ENCODE measurements at regions of chr5 and their contacts with region 1.

Region 1: GRCh38 chr5:177311723-177312648 is at the start of gene MXD3:
- DNase-seq: peak; percentile 99
- H3K4me3 Mint-ChIP-seq: peak within 1 kb of the TSS; percentile 94
- H3K27ac Mint-ChIP-seq: peak within 1 kb of the TSS; percentile 89
- H3K4me1 Mint-ChIP-seq: peaks cover 66% of the 10 kb centered on the region
- H3K27me3 Mint-ChIP-seq: no peaks in the 10 kb centered on the region
- total RNA-seq, gene MXD3: 74.1 to 75.0 TPM

Region 2: DNA sequence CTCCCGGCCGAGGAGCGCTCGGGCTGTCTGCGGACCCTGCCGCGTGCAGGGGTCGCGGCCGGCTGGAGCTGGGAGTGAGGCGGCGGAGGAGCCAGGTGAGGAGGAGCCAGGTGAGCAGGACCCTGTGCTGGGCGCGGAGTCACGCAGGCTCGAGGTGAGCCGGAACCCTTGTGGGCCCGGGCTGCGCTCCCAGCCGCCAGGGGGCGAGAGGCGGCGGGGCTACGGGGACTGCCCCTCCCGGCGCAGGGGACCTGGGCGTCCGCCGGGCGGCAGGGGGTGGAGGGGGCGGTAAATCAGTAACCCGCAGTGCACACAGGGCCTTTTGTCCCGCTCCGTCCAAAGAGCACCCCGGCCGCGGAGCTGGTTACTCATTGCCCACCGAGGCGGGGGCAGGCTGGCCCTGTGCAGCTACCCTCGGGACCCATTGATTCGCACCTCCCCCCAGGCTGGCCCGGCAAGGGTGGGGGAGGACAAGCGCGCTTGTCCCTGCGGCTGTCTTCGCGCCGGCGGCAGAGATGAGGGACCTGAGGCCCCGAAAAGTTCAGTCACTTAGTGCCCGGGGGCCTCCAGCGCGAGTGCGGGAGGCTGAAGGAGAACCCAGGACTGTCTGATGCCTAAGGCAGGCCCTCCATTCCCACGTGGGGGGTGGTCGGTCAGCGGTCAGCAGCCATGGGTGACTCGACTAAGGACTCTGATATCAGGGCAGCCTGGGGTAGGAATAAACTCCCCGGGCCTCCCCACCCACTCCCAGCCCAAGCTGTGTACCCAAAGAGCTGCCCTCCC is 224.9 kb before region 1 on chr5:
- CTCF ChIA-PET with region 1: no interaction called
- POLR2A ChIA-PET with region 1: no interaction called
- DNase-seq: peak; percentile 59
- H3K4me3 Mint-ChIP-seq: no peak overlapping the region
- H3K27ac Mint-ChIP-seq: no peak overlapping the region
- H3K4me1 Mint-ChIP-seq: peaks cover 12% of the 10 kb centered on the region
- H3K27me3 Mint-ChIP-seq: peaks cover 51% of the 10 kb centered on the region

Region 3: DNA sequence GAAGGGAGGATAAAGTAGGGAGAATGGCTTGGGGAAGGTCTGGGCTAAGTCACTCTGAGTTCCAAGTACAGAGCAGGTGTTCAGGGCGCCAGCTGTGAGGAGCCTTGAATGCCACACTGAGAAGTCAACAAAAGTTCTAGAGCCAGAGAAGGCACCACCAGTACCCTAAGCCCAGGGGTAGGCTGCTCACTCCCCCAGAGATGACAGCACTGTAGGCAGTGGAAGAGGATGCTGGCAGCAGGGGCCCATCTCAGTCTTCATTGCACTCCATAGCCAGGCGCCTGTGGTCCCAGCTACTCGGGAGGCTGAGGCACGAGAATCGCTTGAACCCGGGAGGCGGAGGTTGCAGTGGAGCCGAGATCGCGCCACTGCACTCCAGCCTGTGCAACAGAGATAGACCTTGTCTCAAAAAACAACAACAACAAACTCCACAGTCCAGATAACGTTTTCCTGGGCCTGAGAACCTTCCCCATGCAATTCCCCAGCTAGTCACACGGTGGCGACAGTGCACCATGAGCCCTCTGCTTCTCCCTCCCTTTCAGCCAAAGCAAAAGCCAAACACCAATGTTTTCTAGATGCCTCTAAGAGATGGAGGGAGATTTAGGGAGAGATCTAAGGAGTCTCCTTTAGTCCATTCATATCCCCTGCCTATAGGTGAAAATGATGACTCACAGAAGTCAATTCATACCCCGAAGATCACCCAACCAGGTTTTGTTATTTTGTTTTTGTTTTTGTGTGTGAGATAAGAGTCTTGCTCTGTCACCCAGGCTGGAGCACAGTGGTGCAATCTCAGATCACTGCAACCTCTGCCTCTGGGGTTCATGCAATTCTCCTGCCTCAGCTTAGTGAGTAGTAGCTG is 198.2 kb before region 1 on chr5:
- CTCF ChIA-PET with region 1: interaction called, 27 read pairs
- POLR2A ChIA-PET with region 1: no interaction called
- DNase-seq: peak; percentile 83
- H3K4me3 Mint-ChIP-seq: no peak overlapping the region
- H3K27ac Mint-ChIP-seq: no peak overlapping the region
- H3K4me1 Mint-ChIP-seq: peaks cover 25% of the 10 kb centered on the region
- H3K27me3 Mint-ChIP-seq: no peaks in the 10 kb centered on the region

Region 4: GRCh38 chr5:177133091-177133852 is 178.7 kb before region 1 on chr5 and contains the start of gene NSD1:
- CTCF ChIA-PET with region 1: interaction called, 8 read pairs
- POLR2A ChIA-PET with region 1: interaction called, 15 read pairs
- DNase-seq: peak; percentile 93
- H3K4me3 Mint-ChIP-seq: peak within 1 kb of the TSS; percentile 89
- H3K27ac Mint-ChIP-seq: peak within 1 kb of the TSS; percentile 82
- H3K4me1 Mint-ChIP-seq: peaks cover 56% of the 10 kb centered on the region
- H3K27me3 Mint-ChIP-seq: no peaks in the 10 kb centered on the region
- total RNA-seq, gene NSD1: 79.9 to 90.5 TPM

Region 5: DNA sequence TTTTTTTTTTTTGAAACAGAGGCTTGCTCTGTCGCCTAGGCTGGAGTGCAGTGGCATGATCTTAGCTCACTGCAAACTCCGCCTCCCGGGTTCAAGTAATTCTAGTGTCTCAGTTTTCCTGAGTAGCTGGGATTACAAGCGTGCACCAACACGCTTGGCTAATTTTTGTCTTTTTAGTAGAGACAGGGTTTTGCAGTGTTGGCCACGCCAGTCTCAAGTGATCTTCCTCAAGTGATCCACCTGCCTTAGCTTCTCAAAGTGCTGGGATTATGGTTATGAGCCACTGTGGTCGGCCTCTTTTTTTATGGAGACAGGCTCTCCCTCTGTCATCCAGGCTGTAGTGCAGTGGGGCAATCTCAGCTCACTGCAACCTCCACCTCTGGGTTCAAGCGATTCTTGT is 91.4 kb before region 1 on chr5:
- CTCF ChIA-PET with region 1: no interaction called
- POLR2A ChIA-PET with region 1: no interaction called
- DNase-seq: no peak
- H3K4me3 Mint-ChIP-seq: no peak overlapping the region
- H3K27ac Mint-ChIP-seq: no peak overlapping the region
- H3K4me1 Mint-ChIP-seq: peaks cover 9% of the 10 kb centered on the region
- H3K27me3 Mint-ChIP-seq: no peaks in the 10 kb centered on the region

Region 6: DNA sequence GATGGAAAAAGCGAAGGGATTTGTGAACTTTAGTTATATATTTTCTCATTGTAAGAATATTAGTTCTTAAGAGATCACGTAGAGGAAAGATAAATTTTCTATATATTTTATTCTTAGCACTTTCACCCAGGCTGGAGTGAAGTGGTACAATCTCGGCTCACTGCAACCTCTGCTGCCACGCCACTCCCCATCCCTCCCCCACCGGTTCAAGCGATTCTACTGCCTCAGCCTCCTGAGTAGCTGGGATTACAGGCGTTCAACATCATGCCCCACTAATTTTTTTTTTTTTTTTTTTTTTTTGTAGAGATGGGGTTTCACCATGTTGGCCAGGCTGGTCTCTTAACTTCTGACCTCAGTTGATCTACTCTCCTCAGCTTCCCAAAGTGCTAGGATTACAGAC is 51.0 kb before region 1 on chr5:
- CTCF ChIA-PET with region 1: no interaction called
- POLR2A ChIA-PET with region 1: no interaction called
- DNase-seq: no peak
- H3K4me3 Mint-ChIP-seq: no peak overlapping the region
- H3K27ac Mint-ChIP-seq: no peak overlapping the region
- H3K4me1 Mint-ChIP-seq: peaks cover 11% of the 10 kb centered on the region
- H3K27me3 Mint-ChIP-seq: no peaks in the 10 kb centered on the region

Region 7: GRCh38 chr5:177327539-177328522 is 15.8 kb after region 1 on chr5:
- CTCF ChIA-PET with region 1: interaction called, 11 read pairs
- POLR2A ChIA-PET with region 1: interaction called, 15 read pairs
- DNase-seq: no peak
- H3K4me3 Mint-ChIP-seq: no peak overlapping the region
- H3K27ac Mint-ChIP-seq: peak overlapping the region; percentile 77
- H3K4me1 Mint-ChIP-seq: peaks cover 24% of the 10 kb centered on the region
- H3K27me3 Mint-ChIP-seq: no peaks in the 10 kb centered on the region

Region 8: DNA sequence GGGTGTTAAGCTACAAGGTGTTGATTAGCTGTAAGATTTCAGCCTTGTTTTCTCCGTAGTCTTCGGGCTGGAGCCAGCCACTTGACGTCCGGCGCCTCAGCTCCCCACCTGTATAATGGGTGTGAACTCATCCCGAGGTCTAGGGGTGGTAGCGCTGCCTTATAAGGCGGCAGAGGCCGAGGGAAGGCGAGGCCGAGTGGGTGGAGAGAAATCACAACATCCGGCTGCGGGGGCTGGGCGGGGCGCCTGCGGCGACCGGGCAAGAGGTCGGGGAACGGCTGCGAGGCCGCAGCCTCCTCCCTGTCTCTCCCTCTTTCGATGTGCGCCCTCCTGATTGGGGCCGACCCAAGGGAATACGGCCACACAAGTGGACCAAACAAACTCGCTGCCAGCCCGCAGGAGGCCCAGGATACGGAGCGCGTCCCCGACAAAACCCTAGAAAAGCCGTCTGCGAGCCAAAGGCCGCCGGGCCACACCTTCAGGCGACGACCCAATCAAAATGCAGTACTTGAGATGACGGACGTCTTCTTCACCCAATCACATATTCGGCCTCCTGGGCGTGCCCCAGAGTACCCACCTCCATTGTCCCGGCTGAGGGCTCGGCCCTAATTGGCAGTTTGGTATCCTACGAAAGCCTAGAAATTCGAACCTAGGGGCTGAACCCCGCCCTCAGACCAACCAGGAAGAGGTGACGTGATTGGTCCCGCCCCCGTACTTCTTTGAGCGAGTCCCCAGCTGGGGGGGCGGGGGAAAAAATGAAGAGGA is 114.0 kb after region 1 on chr5:
- CTCF ChIA-PET with region 1: interaction called, 10 read pairs
- POLR2A ChIA-PET with region 1: interaction called, 25 read pairs
- DNase-seq: peak; percentile 100
- H3K4me3 Mint-ChIP-seq: peak overlapping the region; percentile 95
- H3K27ac Mint-ChIP-seq: peak overlapping the region; percentile 98
- H3K4me1 Mint-ChIP-seq: peaks cover 44% of the 10 kb centered on the region
- H3K27me3 Mint-ChIP-seq: no peaks in the 10 kb centered on the region

Region 9: GRCh38 chr5:177454397-177455035 is 142.5 kb after region 1 on chr5:
- CTCF ChIA-PET with region 1: interaction called, 18 read pairs
- POLR2A ChIA-PET with region 1: interaction called, 16 read pairs
- DNase-seq: peak; percentile 94
- H3K4me3 Mint-ChIP-seq: peak overlapping the region; percentile 79
- H3K27ac Mint-ChIP-seq: no peak overlapping the region
- H3K4me1 Mint-ChIP-seq: peaks cover 27% of the 10 kb centered on the region
- H3K27me3 Mint-ChIP-seq: peaks cover 17% of the 10 kb centered on the region

Measured in activated CD4-positive, alpha-beta memory T cell treated with anti-CD3 and anti-CD28 coated beads, Interleukin-2, amount 10 ng/mL, durations not matched to agents 7 days and 5 days (primary cell).